GM12878 (cell line): ENCODE measurements at regions of chr14 and their contacts with region 1.

Region 1: DNA sequence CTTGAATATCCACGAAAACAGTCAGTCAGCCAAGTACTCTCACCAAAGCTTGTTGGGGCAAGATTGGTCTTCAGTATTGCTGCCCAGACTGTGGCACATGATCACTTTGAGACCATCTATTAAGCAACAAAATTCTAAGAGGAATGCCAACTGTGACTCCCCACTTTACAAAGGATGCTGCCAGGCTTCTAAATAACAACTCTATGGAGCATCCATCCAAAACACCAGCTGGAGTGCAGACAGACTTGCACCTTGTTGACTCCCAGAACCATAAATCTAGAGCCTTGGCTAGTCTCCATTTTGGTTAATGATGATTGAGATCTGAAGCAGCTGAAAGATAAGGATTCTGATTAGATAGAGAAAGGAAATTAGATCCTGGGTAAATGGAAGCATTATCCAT is 132.8 kb downstream of the DIO2 start:
- DNase-seq: no peak
- ATAC-seq: no peak
- H3K4me3 ChIP-seq: no peak overlapping the region
- H3K27ac ChIP-seq: no peak overlapping the region
- H3K4me1 ChIP-seq: no peaks in the 10 kb centered on the region
- H3K27me3 ChIP-seq: no peaks in the 10 kb centered on the region
- CTCF ChIP-seq: no peak
- EP300 ChIP-seq: no peak
- POLR2A ChIP-seq: no peak
- RAD21 ChIP-seq: no peak

Region 2: DNA sequence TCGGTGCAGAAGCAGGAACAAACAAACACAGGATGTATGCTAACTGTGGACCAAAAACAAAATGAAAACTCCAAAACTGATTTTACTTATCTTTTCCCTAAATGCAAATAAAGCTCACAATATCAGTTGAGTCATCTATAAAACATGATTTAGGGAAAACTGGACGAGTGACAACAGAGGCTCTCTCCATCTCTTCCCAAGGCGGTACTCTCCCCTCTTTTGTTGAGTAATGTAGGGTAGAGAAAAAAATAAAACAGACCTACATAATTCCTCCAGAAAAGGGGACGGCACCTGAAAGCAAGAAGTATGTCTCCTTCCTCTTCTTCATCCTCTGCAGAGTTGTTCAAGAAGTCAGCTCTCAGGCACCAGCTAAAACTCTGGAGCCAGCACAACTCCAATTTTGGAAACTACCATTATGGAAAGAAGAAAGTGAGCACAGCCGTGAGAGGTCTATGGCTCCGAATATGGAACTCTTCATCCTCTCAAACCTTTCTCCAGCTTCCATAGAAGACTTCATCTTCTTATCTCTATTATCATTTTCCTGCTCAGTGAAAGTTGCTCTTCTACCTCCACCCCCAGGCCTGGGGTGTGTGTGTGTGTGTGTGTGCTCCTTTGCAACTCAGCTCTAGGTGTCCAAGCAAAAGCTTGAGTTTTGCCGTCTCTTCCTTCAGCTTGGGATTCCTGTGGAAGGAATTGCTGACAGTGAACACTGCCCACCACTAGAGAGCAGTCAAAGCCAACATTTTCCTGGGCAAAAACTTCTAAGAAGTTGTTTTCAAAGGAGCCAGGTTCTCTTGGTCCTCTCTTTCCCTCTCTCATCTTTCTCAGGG is 22.6 kb before region 1 on chr14:
- CTCF ChIA-PET with region 1: interaction called, 11 read pairs
- POLR2A ChIA-PET with region 1: no interaction called
- RAD21 ChIA-PET with region 1: no interaction called
- SMC1A ChIA-PET with region 1: interaction called, 4 read pairs
- in situ Hi-C with region 1: no loop called
- intact Hi-C with region 1: no loop called
- DNase-seq: no peak
- ATAC-seq: peak; percentile 24; the same call in 2 of the 3 replicates
- H3K4me3 ChIP-seq: no peak overlapping the region
- H3K27ac ChIP-seq: no peak overlapping the region
- H3K4me1 ChIP-seq: no peaks in the 10 kb centered on the region
- H3K27me3 ChIP-seq: no peaks in the 10 kb centered on the region
- CTCF ChIP-seq: peak; percentile 51 to 63 (median 52); a peak in 5 of 6 replicates
- EP300 ChIP-seq: no peak
- POLR2A ChIP-seq: no peak
- RAD21 ChIP-seq: peak; percentile 75